SK-N-SH (cell line): ENCODE measurements at regions of chr1 and their contacts with region 1.

Region 1: DNA sequence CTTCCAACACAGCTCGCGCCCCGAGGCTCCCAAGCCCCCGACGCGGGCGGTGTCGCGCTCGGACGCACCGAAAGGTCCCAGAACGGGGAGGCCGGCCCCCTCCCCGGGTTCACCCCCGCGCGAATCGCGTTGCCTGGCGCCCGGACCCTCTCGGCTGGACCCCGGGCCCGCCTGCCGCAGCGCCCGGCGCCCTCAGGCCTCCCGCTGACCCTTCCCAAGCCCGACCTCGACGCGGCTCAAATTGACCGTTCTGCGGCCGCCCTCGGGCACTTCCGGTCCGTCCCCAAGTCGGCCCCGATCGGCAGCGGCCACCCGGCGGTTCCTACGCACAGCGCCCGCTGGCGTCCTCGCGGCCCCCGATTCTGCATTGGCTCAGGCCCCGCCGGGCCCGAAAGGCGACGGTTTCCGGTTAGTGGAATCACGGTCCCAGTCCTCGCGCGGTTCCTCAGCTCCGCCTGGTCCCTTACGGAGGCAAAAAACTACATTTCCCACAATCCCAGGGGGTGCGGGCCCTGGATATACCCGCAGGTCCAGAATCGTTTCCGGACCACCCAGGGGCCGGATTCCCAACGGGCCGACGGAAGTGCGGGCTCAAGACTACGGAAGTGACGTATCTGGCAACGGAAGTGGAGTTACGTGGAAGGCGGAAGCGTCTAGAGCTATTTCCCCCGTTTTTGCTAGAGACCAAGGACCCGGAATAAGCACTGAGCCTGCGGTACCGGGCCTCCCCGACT is at the start of gene AURKAIP1:
- DNase-seq: peak; percentile 98
- H3K4me3 ChIP-seq: peak within 1 kb of the TSS; percentile 81 to 96
- H3K27ac ChIP-seq: peak within 1 kb of the TSS; percentile 90 to 93
- H3K4me1 ChIP-seq: peaks cover 0 to 29% of the 10 kb centered on the region in 2 experiments; a peak in 1 of 4 replicates
- H3K27me3 ChIP-seq: no peaks in the 10 kb centered on the region
- CTCF ChIP-seq: peak; percentile 28
- EP300 ChIP-seq: peak in 1 of 2 experiments; percentile 37; a peak in 1 of 4 replicates
- RAD21 ChIP-seq: no peak
- polyA plus RNA-seq, gene AURKAIP1: 175 and 214 TPM in 2 replicates

Region 2: GRCh38 chr1:1315435-1315954 is 59.6 kb before region 1 on chr1:
- CTCF ChIA-PET with region 1: interaction called, 13 read pairs
- POLR2A ChIA-PET with region 1: no interaction called
- DNase-seq: no peak
- H3K4me3 ChIP-seq: no peak overlapping the region
- H3K27ac ChIP-seq: no peak overlapping the region
- H3K4me1 ChIP-seq: peaks cover 0 to 4% of the 10 kb centered on the region in 2 experiments; a peak in 1 of 4 replicates
- H3K27me3 ChIP-seq: no peaks in the 10 kb centered on the region
- CTCF ChIP-seq: no peak
- EP300 ChIP-seq: no peak
- RAD21 ChIP-seq: no peak

Region 3: GRCh38 chr1:1349256-1350012 is 25.7 kb before region 1 on chr1 and contains the start of gene DVL1:
- CTCF ChIA-PET with region 1: interaction called, 48 read pairs
- POLR2A ChIA-PET with region 1: interaction called, 7 read pairs
- DNase-seq: peak; percentile 98
- H3K4me3 ChIP-seq: peak within 1 kb of the TSS; percentile 67 to 87
- H3K27ac ChIP-seq: peak within 1 kb of the TSS in 1 of 2 experiments; percentile 90; a peak in 2 of 4 replicates
- H3K4me1 ChIP-seq: peaks cover 0 to 45% of the 10 kb centered on the region in 2 experiments; a peak in 1 of 4 replicates
- H3K27me3 ChIP-seq: no peaks in the 10 kb centered on the region
- CTCF ChIP-seq: peak; percentile 55
- EP300 ChIP-seq: no peak
- RAD21 ChIP-seq: peak; percentile 46
- polyA plus RNA-seq, gene DVL1: 31.3 and 32.0 TPM in 2 replicates

Region 4: GRCh38 chr1:1358433-1359261 is 16.4 kb before region 1 on chr1 and contains the start of gene MXRA8:
- CTCF ChIA-PET with region 1: interaction called, 48 read pairs
- POLR2A ChIA-PET with region 1: interaction called, 6 read pairs
- DNase-seq: no peak
- H3K4me3 ChIP-seq: no peak within 1 kb of the TSS
- H3K27ac ChIP-seq: peak within 1 kb of the TSS; percentile 88 to 98
- H3K4me1 ChIP-seq: peaks cover 20 to 52% of the 10 kb centered on the region in 2 experiments; a peak in 3 of 4 replicates
- H3K27me3 ChIP-seq: no peaks in the 10 kb centered on the region
- CTCF ChIP-seq: no peak
- EP300 ChIP-seq: no peak
- RAD21 ChIP-seq: no peak
- polyA plus RNA-seq, gene MXRA8: 2.5 and 3.8 TPM in 2 replicates

Region 5: GRCh38 chr1:1399187-1399871 is 24.2 kb after region 1 on chr1 and contains the start of gene CCNL2:
- CTCF ChIA-PET with region 1: interaction called, 8 read pairs
- POLR2A ChIA-PET with region 1: interaction called, 15 read pairs
- DNase-seq: peak; percentile 99
- H3K4me3 ChIP-seq: peak within 1 kb of the TSS; percentile 74 to 78
- H3K27ac ChIP-seq: peak within 1 kb of the TSS; percentile 72 to 85
- H3K4me1 ChIP-seq: peaks cover 6 to 23% of the 10 kb centered on the region in 2 experiments; a peak in 1 of 4 replicates
- H3K27me3 ChIP-seq: no peaks in the 10 kb centered on the region
- CTCF ChIP-seq: peak; percentile 53
- EP300 ChIP-seq: peak in 1 of 2 experiments; percentile 20; a peak in 1 of 4 replicates
- RAD21 ChIP-seq: no peak
- polyA plus RNA-seq, gene CCNL2: 362 and 475 TPM in 2 replicates

Region 6: DNA sequence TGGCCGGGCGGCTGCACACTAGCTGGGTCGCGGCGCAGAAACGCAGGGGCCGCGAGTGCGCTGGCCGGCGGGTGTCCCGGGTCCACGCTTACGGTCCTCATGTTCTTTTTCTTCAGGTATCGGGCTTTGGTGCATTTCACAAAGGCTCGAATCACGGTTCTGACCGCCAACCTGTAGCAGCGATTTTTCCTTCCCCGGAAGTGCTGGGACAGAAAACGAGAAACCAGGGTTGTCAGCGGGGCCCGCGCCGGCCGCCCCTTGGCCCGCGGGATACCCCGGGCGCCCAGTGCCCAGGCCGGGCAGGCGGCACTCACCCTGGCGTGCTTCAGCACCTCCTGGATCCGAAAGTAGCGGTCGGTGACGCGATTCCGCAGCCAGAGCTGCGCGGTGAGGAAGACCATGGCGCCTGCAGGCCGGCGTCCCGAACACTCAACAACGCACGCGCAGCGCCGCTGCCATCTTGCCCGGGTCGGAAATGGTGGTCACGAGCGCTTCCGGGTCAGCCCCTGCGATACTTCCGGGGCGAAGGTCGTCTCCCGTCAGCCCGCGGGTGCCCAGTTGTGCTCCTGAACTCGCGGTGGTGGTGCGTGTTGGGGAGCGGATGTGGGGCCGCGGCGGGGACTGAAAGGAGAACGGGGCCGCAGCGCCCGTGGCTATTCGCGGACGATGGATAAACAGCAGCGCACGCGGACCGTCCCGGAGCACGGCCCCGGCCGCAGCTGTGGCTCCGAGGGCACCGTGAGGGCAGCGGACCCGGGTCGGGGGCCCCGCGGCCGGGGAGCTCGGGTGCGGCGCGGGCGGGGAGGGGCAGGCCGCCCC is 31.9 kb after region 1 on chr1 and contains the start of gene MRPL20:
- CTCF ChIA-PET with region 1: interaction called, 8 read pairs
- POLR2A ChIA-PET with region 1: interaction called, 18 read pairs
- DNase-seq: peak; percentile 98
- H3K4me3 ChIP-seq: peak within 1 kb of the TSS; percentile 74 to 77
- H3K27ac ChIP-seq: peak within 1 kb of the TSS; percentile 72 to 77
- H3K4me1 ChIP-seq: peaks cover 11 to 15% of the 10 kb centered on the region in 2 experiments; a peak in 3 of 4 replicates
- H3K27me3 ChIP-seq: no peaks in the 10 kb centered on the region
- CTCF ChIP-seq: no peak
- EP300 ChIP-seq: no peak
- RAD21 ChIP-seq: no peak
- polyA plus RNA-seq, gene MRPL20: 159 and 210 TPM in 2 replicates

Region 7: GRCh38 chr1:1451696-1452367 is 76.7 kb after region 1 on chr1:
- CTCF ChIA-PET with region 1: no interaction called
- POLR2A ChIA-PET with region 1: no interaction called
- DNase-seq: no peak
- H3K4me3 ChIP-seq: no peak overlapping the region
- H3K27ac ChIP-seq: no peak overlapping the region
- H3K4me1 ChIP-seq: no peaks in the 10 kb centered on the region
- H3K27me3 ChIP-seq: no peaks in the 10 kb centered on the region
- CTCF ChIP-seq: no peak
- EP300 ChIP-seq: no peak
- RAD21 ChIP-seq: no peak